ENCODE measurements at regions of chr9 and their contacts with region 1.

Region 1: DNA sequence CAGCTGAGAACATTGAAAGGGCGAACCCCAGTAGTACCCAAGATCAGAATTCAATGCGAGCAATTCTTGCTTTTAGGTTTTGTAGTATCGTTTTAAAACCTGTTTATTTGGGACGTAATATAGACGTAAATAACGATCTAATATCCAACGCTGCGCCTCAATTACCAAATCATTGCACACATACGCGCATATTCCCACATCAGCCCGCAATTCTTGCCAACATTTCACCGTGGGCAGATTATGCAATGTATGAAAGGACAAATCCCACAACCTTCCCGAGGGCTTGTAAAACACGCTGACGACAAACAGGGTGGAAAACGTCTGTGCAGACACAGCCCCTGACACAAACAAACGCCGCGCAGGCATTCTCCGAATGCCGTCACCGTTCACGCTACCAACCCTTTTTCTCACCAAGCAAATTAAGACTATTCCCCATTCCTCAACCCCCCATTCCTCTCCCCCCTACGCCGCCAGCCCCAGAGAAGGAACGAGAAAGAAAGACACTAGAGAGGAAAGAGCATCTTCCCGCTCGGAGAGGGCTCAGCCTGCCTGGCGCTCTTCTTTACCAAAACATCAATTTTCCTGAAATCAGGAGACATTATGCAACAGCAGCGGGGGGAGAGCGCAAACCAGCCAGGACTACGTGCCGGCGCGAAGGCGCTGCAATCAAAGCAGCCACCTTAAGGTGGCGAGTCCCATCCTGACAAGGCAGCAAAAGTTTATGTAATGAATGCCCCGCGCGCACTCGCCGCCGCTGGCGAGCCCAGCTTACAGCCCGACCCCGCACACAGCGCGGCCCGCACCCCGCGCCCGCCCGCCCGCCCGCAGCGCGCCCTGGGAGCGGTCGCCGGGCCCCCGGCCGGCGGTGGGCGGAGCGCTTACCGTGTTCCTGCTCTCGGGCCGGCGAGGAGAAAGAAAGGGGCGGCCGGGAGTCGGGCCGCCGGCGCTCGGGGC is 597 bp downstream of the NFIL3 start:
- DNase-seq: peak; percentile 74
- ATAC-seq: peak; percentile 34
- H3K4me3 Mint-ChIP-seq: peak overlapping the region; percentile 99
- H3K27ac Mint-ChIP-seq: peak overlapping the region; percentile 88
- H3K4me1 Mint-ChIP-seq: peaks cover 58% of the 10 kb centered on the region
- H3K27me3 Mint-ChIP-seq: peaks cover 4% of the 10 kb centered on the region
- CTCF ChIP-seq: peak; percentile 30

Region 2: DNA sequence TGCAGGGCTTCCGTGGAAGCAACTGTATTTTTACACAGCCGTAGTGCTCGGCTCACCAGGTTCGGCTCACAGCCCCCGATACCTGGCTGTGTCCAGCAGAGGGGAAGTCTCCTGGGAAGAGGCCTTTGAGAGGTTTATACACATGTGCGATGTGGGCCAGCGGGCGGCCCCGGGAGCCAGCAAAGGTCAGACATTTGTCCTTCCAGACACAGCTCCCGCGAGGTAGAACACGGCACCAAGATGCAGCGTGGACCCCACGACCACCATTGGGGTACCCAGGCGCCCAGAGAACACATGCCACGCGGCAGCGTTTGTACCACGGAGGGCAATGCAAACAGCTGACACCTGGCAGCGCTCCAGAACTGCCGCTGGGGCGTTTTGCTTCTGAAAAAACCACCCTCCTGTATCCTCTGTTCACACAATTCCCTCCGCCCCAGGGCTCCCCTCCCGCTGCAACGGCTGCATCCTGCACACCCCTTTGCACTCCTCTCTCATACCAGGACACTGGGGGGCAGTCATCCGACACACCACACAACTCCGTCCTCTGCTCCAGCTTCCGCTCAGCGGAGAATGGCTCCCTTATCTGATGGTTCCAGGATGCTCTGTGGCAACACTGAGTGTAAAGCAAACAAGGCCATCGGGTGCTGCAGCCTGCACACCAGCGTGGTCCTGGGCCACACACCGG is 386.1 kb before region 1 on chr9:
- CTCF ChIA-PET with region 1: interaction called, 15 read pairs
- POLR2A ChIA-PET with region 1: interaction called, 6 read pairs
- intact Hi-C with region 1: loop called (anchors 5 kb)
- DNase-seq: peak; percentile 85
- ATAC-seq: peak; percentile 89
- H3K4me3 Mint-ChIP-seq: peak overlapping the region; percentile 37
- H3K27ac Mint-ChIP-seq: peak overlapping the region; percentile 69
- H3K4me1 Mint-ChIP-seq: peaks cover 52% of the 10 kb centered on the region
- H3K27me3 Mint-ChIP-seq: peaks cover under 1% of the 10 kb centered on the region
- CTCF ChIP-seq: peak; percentile 74

Region 3: GRCh38 chr9:91207729-91208418 is 215.2 kb before region 1 on chr9:
- CTCF ChIA-PET with region 1: interaction called, 5 read pairs
- POLR2A ChIA-PET with region 1: no interaction called
- intact Hi-C with region 1: loop called (anchors 5 kb)
- DNase-seq: peak; percentile 55
- ATAC-seq: peak; percentile 76
- H3K4me3 Mint-ChIP-seq: peak overlapping the region; percentile 35
- H3K27ac Mint-ChIP-seq: peak overlapping the region; percentile 98
- H3K4me1 Mint-ChIP-seq: peaks cover 69% of the 10 kb centered on the region
- H3K27me3 Mint-ChIP-seq: no peaks in the 10 kb centered on the region
- CTCF ChIP-seq: no peak

Region 4: GRCh38 chr9:91386765-91387164 is 36.3 kb before region 1 on chr9:
- CTCF ChIA-PET with region 1: no interaction called
- POLR2A ChIA-PET with region 1: no interaction called
- intact Hi-C with region 1: no loop called
- DNase-seq: no peak
- ATAC-seq: no peak
- H3K4me3 Mint-ChIP-seq: no peak overlapping the region
- H3K27ac Mint-ChIP-seq: no peak overlapping the region
- H3K4me1 Mint-ChIP-seq: no peaks in the 10 kb centered on the region
- H3K27me3 Mint-ChIP-seq: peaks cover 3% of the 10 kb centered on the region
- CTCF ChIP-seq: no peak

Region 5: DNA sequence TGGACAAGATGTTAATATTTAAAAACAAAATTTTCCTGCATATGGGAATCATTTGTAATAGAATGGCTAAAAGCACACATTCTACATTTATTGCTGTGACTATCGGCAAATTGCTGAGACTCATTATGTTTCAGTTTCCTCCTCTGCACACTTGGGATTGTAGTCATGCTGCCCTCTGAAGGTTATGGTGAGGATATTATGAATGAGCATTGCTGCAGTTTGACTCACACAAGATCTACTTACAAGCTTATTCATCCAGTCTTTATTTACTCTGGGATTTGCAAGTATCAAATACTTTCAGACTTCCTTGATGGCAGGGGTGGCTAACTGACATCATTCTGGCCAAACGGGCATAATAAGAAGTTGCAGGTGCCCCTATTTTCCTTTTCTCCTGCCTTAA is 10.1 kb after region 1 on chr9:
- CTCF ChIA-PET with region 1: interaction called, 11 read pairs
- POLR2A ChIA-PET with region 1: interaction called, 3 read pairs
- intact Hi-C with region 1: no loop called
- DNase-seq: peak; percentile 26
- ATAC-seq: peak; percentile 87
- H3K4me3 Mint-ChIP-seq: no peak overlapping the region
- H3K27ac Mint-ChIP-seq: no peak overlapping the region
- H3K4me1 Mint-ChIP-seq: peaks cover 10% of the 10 kb centered on the region
- H3K27me3 Mint-ChIP-seq: peaks cover 19% of the 10 kb centered on the region
- CTCF ChIP-seq: peak; percentile 40